Testis (tissue), 5 donors: ENCODE measurements at regions of chr1 and their contacts with region 1.

Region 1: DNA sequence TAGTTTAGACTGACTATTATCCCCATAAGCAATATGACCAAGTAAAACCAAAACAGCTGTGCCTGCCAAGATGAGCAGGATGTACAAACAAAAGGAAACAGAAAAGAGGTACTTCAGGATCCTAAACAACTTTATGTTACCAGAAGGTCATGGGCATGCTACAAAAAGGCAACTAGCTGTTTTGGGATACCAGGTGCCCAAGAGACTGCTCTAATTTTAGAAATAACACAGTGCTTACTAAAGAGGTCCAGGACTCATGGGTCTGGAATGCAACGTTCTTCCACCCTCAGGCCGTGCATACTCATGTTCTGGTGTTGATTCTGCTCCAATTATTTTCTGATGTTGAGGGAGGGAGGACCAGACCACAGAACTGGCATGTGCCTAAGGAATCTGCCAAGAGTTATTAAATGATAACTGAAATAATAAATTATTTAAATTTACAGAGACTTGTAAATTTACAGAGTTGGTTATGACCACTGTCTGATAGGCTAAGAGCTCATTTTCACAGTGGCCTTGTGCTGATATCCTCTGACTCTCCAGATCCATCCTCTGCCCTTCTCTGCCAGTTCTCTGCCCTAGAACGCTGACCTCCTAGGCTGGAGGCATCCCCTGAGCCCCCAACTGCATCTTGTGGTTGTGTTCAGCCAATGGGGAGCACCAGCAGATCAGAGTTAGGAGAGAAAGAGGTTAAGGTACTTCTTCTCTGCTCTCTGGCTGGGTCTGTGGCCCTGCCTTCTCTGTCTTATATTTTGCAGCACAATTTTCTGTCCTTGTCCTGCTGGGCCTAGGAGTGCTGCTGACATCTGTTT is 37.7 kb upstream of the BCL10 start:
- DNase-seq: peak; percentile 26
- H3K4me3 ChIP-seq: no peak overlapping the region
- H3K27ac ChIP-seq: peak overlapping the region in 1 of 2 donors; percentile 79
- H3K4me1 ChIP-seq: no peaks in the 10 kb centered on the region
- H3K27me3 ChIP-seq: no peaks in the 10 kb centered on the region
- CTCF ChIP-seq: no peak
- POLR2A ChIP-seq: no peak

Region 2: DNA sequence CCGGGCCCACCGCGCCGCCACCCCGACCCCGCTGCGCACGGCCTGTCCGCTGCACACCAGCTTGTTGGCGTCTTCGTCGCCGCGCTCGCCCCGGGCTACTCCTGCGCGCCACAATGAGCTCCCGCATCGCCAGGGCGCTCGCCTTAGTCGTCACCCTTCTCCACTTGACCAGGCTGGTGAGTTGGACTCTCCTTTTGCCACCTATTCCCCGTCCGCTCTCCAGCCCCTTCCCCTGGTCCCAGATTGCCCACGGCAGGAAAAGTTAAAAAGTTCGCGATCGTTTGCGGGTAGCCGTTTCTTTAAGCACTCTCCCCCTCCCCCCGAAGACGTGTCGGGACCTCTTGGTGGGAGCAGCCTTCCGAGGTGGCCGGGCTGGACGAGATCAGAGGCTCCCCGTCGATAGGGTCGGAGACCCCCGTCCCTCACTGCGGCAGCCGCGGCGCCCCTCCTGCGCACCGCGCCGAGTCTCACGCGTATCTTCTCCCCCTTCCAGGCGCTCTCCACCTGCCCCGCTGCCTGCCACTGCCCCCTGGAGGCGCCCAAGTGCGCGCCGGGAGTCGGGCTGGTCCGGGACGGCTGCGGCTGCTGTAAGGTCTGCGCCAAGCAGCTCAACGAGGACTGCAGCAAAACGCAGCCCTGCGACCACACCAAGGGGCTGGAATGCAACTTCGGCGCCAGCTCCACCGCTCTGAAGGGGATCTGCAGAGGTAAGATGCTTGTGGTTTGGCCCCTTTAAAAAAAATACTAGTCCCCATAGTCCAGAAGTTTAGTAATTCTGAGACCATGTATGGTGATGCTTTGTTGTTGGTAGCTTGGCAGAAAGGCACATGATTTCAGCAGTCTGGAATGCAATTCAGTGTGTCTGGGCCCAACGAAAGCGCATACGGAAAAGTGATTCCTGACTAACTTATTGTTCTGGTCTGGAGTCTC is 267.0 kb after region 1 on chr1:
- intact Hi-C with region 1: loop called (anchors 5 kb)
- DNase-seq: peak; percentile 73
- H3K4me3 ChIP-seq: peak overlapping the region; percentile 76 to 90
- H3K27ac ChIP-seq: peak overlapping the region; percentile 91 to 94
- H3K4me1 ChIP-seq: peaks cover 19% of the 10 kb centered on the region
- H3K27me3 ChIP-seq: no peaks in the 10 kb centered on the region
- CTCF ChIP-seq: peak; percentile 55 to 72 (median 65)
- POLR2A ChIP-seq: no peak